Right cardiac atrium (tissue), 5 donors: ENCODE measurements at regions of chr11 and their contacts with region 1.

Region 1: DNA sequence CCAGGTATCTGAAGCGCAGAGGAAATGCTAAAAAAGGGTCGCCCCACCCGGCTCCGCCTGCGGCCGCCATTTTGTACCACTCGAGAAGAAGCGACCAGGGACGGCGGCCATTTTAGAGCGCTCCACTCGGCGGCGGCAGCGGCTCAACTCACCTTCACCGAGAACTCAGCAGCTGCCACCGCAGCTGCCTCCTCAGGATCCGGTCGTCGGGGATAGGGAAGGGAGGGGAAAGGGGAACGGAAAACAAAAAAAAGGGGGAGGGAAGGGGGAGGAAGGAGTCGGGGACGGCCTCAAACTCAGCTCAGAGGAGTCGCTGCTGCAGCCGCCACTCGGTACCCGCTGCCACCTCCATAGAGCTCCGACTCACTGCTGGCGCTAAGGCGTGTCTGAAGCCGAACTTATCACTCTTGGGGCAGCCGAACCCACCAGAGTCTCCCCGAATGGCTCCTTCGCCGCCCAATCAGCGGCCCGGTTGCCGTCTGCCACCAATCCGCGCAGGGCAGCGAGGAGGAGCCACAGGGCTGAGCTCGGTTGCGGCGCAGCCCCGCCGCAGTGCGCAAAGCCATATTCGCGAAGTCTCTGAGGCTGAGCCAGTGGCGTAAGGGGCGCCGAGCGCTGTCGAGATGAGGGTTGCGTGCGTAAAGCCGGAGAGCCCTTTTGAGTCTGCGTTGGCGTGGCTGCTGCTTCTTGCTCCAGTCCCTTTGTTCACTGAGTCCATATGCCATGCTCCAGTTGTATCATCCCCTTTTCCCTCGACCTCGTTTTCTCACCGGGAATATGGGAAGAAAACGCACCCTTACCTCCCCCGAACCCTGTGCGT is at the start of gene EIF4G2:
- DNase-seq: peak; percentile 99
- ATAC-seq: peak; percentile 97 to 99
- H3K4me3 ChIP-seq: peak within 1 kb of the TSS; percentile 66
- H3K27ac ChIP-seq: peak within 1 kb of the TSS; percentile 95
- H3K4me1 ChIP-seq: no peaks in the 10 kb centered on the region
- H3K27me3 ChIP-seq: no peaks in the 10 kb centered on the region
- total RNA-seq, gene EIF4G2: 657 to 718 (median 693) TPM

Region 2: DNA sequence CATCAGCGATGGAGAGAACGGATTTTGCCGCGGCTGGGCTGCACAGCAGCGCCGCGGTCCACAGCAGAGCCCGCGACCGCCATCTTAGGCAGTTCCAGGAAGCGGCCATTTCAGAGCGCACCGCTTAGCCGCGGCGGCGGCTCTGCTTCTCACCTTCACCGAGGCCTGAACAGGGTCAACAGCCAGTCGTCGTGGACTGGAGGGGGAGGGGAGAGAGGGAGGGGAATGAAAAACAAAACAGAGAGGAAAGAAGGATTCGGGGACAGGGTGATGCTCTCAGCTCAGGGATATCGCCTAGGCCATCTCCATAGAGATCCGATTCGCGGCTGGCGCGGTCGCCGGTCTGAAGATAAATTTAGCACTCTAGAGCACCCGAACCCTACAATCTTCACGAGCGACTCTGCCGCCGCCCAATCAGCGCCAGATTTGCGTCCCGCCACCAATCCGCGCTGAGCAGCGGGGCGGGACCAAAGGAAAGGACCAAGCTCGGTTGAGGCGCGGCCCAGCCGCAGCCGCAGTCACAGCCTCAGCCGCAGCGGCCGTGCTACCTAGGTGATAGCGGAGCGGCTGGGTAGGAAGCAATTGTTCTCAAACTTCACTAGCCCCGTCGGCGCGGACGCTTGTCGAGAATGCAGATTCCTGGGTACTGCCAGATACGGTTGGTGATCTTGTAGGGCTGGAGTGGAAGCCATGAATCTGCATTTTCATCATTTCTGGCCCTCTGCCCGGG is 49.1 kb after region 1 on chr11 and contains the start of gene ZBED5:
- intact Hi-C with region 1: loop called in 2 of 4 experiments (anchors 5 kb)
- DNase-seq: peak; percentile 97 to 99 (median 99)
- ATAC-seq: peak; percentile 98
- H3K4me3 ChIP-seq: peak within 1 kb of the TSS; percentile 73
- H3K27ac ChIP-seq: peak within 1 kb of the TSS; percentile 99
- H3K4me1 ChIP-seq: no peaks in the 10 kb centered on the region
- H3K27me3 ChIP-seq: no peaks in the 10 kb centered on the region
- total RNA-seq, gene ZBED5: 40.6 to 46.7 (median 44.2) TPM

Region 3: DNA sequence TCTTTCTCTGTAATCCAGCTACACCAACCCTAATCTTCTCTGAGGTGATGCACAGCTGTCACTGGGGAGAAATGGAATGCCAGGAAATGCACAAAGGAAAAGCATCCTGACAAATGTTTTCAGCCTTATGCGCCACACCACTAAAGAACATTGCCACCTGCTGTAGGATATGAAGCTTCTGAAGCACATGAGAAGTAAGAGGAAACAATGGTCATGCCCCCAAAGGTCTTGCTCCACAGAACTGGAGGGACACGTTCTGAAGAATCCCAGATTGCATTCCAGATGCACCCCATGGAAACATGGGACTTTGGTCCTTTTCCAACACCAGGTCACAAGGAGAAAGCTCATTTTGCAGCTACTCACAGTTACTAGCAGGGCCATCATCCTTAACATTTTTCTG is 97.8 kb after region 1 on chr11:
- intact Hi-C with region 1: loop called in 3 of 4 experiments (anchors 5 to 10 kb)
- DNase-seq: no peak
- ATAC-seq: peak in 1 of 2 donors; percentile 37
- H3K4me3 ChIP-seq: no peak overlapping the region
- H3K27ac ChIP-seq: no peak overlapping the region
- H3K4me1 ChIP-seq: no peaks in the 10 kb centered on the region
- H3K27me3 ChIP-seq: no peaks in the 10 kb centered on the region

Region 4: DNA sequence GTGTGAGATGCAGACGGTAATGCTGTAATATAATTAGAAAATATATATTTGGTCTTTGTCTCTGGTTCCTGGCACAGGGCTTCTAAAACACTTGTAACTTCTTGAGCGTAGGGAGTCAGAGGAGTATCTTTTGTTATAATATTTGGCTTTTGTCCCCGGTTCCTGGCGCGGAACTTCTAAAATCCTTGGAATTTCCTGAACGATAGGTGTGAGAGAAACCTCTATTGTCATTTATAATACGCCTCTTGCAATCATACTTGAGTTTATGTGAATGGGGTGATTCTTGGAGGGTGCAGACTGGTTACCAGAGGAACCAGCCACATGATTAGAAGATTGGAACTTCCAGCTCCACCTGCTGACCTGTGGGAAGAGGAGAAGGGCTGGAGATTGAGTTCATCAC is 103.1 kb after region 1 on chr11:
- intact Hi-C with region 1: loop called in 3 of 4 experiments (anchors 5 to 10 kb)
- DNase-seq: no peak
- ATAC-seq: peak; percentile 36 to 47
- H3K4me3 ChIP-seq: no peak overlapping the region
- H3K27ac ChIP-seq: peak overlapping the region; percentile 79
- H3K4me1 ChIP-seq: peaks cover 3% of the 10 kb centered on the region
- H3K27me3 ChIP-seq: no peaks in the 10 kb centered on the region

Region 5: GRCh38 chr11:10933455-10934292 is 124.9 kb after region 1 on chr11:
- intact Hi-C with region 1: loop called in 1 of 4 experiments (anchors 10 kb)
- DNase-seq: peak; percentile 90 to 96 (median 95)
- ATAC-seq: peak; percentile 87 to 90
- H3K4me3 ChIP-seq: peak overlapping the region; percentile 52
- H3K27ac ChIP-seq: peak overlapping the region; percentile 83
- H3K4me1 ChIP-seq: peaks cover 2% of the 10 kb centered on the region
- H3K27me3 ChIP-seq: no peaks in the 10 kb centered on the region